A549 (cell line): ENCODE measurements at regions of chr12 and their contacts with region 1.

Region 1: DNA sequence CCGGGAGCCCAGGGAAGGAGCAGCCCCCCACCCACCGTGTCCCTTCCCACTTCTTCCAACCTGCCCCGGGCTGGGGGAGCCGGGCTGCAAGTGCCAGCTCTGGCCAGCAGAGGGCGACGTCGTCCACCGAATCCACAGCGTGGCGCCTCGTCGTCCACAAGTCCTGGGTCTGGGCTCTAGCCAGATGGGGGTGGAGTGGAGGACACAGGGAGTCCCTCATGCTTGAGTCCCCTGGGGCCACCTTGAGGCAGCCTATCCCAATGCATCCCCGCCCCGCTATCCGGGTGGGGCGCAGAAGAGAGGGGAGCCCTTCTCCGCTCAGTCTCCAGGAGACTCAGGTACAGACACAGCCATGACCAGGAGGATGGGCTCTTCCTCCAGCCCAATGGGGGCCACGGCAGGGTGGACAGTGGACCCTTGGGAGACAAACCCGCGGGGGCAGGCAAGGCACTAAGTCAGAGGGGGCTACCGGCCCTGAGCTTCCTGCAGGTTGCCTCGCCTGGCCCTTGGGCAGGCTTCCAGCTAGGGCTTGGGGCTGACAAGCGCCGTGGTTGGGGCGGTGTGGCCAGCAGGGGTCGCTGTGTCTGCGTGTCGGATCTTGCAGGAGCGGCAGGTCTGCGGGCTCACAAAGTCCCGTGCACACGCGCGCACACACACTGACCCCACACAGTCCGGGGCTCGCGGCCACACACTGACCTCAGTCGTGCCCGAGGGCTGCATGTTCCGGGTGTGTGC is 5.5 kb downstream of the AQP5 start:
- DNase-seq: peak; percentile 91 to 93
- ATAC-seq: peak; percentile 76 to 87
- H3K4me3 ChIP-seq: peak overlapping the region; percentile 49
- H3K27ac ChIP-seq: peak overlapping the region; percentile 77 to 85
- H3K4me1 ChIP-seq: peaks cover 16% of the 10 kb centered on the region
- CTCF ChIP-seq: peak; percentile 79
- EP300 ChIP-seq: no peak
- POLR2A ChIP-seq: no peak
- RAD21 ChIP-seq: peak; percentile 81 to 86

Region 2: GRCh38 chr12:49930515-49931288 is 36.5 kb before region 1 on chr12:
- CTCF ChIA-PET with region 1: interaction called, 31 read pairs
- POLR2A ChIA-PET with region 1: no interaction called
- DNase-seq: no peak
- ATAC-seq: peak; percentile 40 to 54; a peak in 1 of 6 replicates
- H3K4me3 ChIP-seq: no peak overlapping the region
- H3K27ac ChIP-seq: no peak overlapping the region
- H3K4me1 ChIP-seq: peaks cover 7% of the 10 kb centered on the region; the same call in 2 of the 3 replicates
- CTCF ChIP-seq: no peak
- EP300 ChIP-seq: no peak
- POLR2A ChIP-seq: no peak
- RAD21 ChIP-seq: no peak

Region 3: DNA sequence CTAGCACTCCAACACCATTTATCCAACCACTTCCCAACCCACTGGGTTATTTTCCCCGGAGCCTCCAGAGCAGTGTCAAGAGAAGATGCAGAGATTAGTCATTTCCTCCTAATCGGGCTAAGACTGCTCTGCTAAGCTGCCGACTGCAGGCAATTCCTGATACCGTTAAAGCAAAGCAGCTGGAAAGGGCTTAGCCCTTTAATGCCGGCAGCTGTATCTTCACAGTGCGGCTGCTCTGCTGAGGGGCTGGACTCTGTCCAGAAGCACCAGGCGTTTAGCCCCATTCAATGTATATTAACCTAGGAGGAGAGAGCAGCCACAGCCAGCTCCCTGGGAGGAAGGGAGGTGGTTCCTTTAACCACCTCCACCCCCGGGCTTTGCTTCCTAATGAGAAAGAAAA is 16.7 kb after region 1 on chr12:
- CTCF ChIA-PET with region 1: interaction called, 327 read pairs
- POLR2A ChIA-PET with region 1: no interaction called
- DNase-seq: no peak
- ATAC-seq: peak; percentile 55 to 57; a peak in 3 of 6 replicates
- H3K4me3 ChIP-seq: no peak overlapping the region
- H3K27ac ChIP-seq: no peak overlapping the region
- H3K4me1 ChIP-seq: no peaks in the 10 kb centered on the region
- CTCF ChIP-seq: no peak
- EP300 ChIP-seq: no peak
- POLR2A ChIP-seq: no peak
- RAD21 ChIP-seq: no peak

Region 4: DNA sequence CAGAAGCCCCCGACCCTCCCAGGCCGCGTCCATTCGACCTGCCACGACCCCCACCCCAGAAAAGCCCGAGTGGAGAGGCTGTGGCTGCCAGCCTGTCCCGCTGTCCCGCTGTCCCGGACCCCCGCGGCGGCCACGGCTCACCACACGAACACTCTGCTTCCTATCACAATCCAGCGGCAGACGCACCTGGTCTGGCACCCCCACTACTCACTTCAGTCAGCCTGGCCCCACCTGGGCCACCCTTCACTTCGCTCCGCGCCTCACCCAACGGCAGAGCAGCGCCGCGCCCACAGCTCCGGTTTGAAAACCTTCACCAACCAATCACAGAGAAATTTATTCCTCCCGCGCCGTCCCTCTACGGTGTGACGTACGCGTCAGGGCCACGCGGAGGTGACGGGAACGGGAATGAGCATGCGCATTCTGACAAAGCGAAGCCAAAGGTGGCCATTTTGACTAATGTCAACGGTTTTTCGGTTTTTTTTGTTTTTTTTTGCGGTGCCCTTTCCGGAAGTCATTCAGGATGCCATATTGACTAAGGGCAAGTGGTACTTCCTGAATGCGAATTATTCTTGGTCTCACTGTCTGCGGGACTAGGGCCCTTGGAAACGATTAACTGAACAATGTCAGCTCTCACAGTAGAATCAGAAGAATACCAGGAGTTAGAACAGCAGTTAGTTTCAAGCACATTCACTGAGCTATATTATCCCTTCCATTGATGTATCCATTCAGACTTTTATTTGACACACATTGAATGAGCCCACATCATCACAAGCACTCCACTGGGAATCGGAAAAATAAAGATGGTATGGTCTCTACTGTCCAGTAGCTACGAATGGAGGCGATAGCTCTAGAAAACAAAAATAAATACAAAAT is 58.2 kb after region 1 on chr12 and contains the start of gene RACGAP1:
- CTCF ChIA-PET with region 1: interaction called, 15 read pairs
- POLR2A ChIA-PET with region 1: no interaction called
- DNase-seq: peak; percentile 97 to 99
- ATAC-seq: peak; percentile 99
- H3K4me3 ChIP-seq: peak within 1 kb of the TSS; percentile 83
- H3K27ac ChIP-seq: peak within 1 kb of the TSS; percentile 82 to 91
- H3K4me1 ChIP-seq: peaks cover 11% of the 10 kb centered on the region; the same call in 2 of the 3 replicates
- CTCF ChIP-seq: no peak
- EP300 ChIP-seq: no peak
- POLR2A ChIP-seq: no peak; the same call in 1 of the 2 replicates
- RAD21 ChIP-seq: no peak
- polyA plus RNA-seq, gene RACGAP1: 99.2 and 103 TPM in 2 replicates

Region 5: DNA sequence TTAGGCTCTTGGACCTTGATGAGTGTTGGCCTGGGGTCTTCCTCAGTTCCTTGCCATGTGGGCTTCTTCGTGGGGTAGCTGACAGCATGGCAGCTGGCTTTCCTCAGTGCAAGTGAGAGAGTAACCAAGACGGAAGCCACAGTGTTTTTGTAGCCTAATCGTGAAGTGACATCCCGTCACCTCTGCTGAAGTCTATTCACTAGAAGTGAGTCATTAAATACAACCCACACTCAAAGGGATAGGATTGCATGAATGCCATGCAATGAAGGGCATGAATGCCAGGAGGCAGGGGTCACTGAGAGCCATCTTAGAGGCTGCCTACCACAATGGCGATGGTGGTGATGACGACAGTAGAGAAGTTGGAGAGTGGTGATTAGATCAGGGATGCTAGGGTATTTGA is 76.6 kb after region 1 on chr12:
- CTCF ChIA-PET with region 1: interaction called, 75 read pairs
- POLR2A ChIA-PET with region 1: no interaction called
- DNase-seq: no peak
- ATAC-seq: no peak
- H3K4me3 ChIP-seq: no peak overlapping the region
- H3K27ac ChIP-seq: no peak overlapping the region
- H3K4me1 ChIP-seq: no peaks in the 10 kb centered on the region
- CTCF ChIP-seq: no peak
- EP300 ChIP-seq: no peak
- POLR2A ChIP-seq: no peak
- RAD21 ChIP-seq: no peak

Region 6: DNA sequence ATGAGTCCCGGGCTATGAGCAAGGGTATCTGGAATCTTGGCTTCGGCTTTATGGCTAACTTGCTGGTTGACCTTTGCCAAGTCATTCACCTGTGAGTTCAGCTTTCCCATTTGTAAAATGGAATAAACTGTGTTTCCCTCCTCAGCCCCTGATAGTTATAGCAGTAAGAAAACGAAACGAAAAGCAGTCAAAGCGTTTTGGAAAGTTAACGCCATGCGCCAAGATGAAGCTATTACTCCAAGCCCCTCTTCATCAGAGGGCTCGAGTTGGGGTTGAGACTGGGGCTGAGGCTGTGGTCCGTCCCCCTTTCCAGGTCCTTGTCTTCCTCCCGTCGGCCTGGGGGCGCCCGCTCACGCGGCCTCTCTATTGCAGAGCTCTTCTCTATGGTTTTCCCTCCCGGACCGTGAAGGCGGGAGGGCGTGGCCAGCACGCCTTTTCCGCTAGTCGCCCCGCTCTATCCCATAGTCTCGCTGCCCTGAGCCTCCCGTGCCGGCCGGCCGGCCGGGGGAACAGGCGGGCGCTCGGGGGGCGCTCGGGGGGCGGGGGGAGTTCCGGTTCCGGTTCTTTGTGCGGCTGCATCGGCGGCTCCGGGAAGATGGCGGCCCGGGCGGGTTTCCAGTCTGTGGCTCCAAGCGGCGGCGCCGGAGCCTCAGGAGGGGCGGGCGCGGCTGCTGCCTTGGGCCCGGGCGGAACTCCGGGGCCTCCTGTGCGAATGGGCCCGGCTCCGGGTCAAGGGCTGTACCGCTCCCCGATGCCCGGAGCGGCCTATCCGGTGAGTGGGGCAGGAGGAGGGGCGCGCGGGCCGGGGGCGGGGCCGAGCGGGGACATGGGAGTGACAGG is 117.8 kb after region 1 on chr12 and contains the start of gene SMARCD1:
- CTCF ChIA-PET with region 1: interaction called, 708 read pairs
- POLR2A ChIA-PET with region 1: interaction called, 6 read pairs
- DNase-seq: peak; percentile 92 to 95
- ATAC-seq: peak; percentile 87 to 93
- H3K4me3 ChIP-seq: peak within 1 kb of the TSS; percentile 64
- H3K27ac ChIP-seq: peak within 1 kb of the TSS; percentile 96 to 99
- H3K4me1 ChIP-seq: peaks cover 36% of the 10 kb centered on the region
- CTCF ChIP-seq: peak; percentile 72
- EP300 ChIP-seq: no peak
- POLR2A ChIP-seq: peak; percentile 37; the same call in 1 of the 2 replicates
- RAD21 ChIP-seq: no peak
- polyA plus RNA-seq, gene SMARCD1: 80.7 and 113 TPM in 2 replicates